GM12878 (cell line): ENCODE measurements at regions of chr12 and their contacts with region 1.

Region 1: DNA sequence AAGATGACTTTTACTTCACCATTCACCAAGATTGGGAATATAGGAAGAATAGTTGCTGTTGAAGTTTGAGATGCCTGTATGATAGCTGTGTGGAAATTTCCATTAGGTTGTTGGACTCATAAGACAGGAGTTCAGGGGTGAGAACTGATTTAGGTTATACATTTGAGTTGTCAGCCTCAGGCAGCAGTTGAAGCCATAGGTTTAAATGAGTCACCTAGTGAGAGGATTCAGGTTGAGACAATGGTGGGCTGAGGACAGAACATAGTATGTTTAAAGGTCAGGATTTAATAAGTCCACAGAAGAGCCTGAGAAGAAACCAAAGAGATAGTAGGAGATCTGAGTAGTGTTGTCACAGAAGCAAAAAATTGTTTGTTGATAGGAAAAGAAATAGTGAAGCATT is 63.6 kb upstream of the MON2 start:
- DNase-seq: no peak
- ATAC-seq: no peak
- H3K4me3 ChIP-seq: no peak overlapping the region
- H3K27ac ChIP-seq: no peak overlapping the region
- H3K4me1 ChIP-seq: no peaks in the 10 kb centered on the region
- H3K27me3 ChIP-seq: no peaks in the 10 kb centered on the region
- CTCF ChIP-seq: no peak
- EP300 ChIP-seq: no peak
- POLR2A ChIP-seq: no peak
- RAD21 ChIP-seq: no peak

Region 2: GRCh38 chr12:62382526-62382925 is 20.5 kb before region 1 on chr12:
- CTCF ChIA-PET with region 1: interaction called, 3 read pairs
- POLR2A ChIA-PET with region 1: interaction called, 3 read pairs
- RAD21 ChIA-PET with region 1: no interaction called
- SMC1A ChIA-PET with region 1: interaction called, 6 read pairs
- in situ Hi-C with region 1: no loop called
- intact Hi-C with region 1: loop called (anchors 2 kb)
- DNase-seq: no peak
- ATAC-seq: no peak
- H3K4me3 ChIP-seq: no peak overlapping the region
- H3K27ac ChIP-seq: no peak overlapping the region
- H3K4me1 ChIP-seq: no peaks in the 10 kb centered on the region
- H3K27me3 ChIP-seq: no peaks in the 10 kb centered on the region
- CTCF ChIP-seq: no peak
- EP300 ChIP-seq: no peak
- POLR2A ChIP-seq: no peak
- RAD21 ChIP-seq: no peak